Esophagus squamous epithelium (tissue), 5 donors: ENCODE measurements at regions of chr3 and their contacts with region 1.

Region 1: GRCh38 chr3:107271787-107272387 is 105.4 kb upstream of the CCDC54 start:
- DNase-seq: no peak
- H3K4me3 ChIP-seq: no peak overlapping the region
- H3K27ac ChIP-seq: no peak overlapping the region
- H3K4me1 ChIP-seq: no peaks in the 10 kb centered on the region
- H3K27me3 ChIP-seq: no peaks in the 10 kb centered on the region
- CTCF ChIP-seq: peak; percentile 42 to 70 (median 54)
- POLR2A ChIP-seq: no peak

Region 2: DNA sequence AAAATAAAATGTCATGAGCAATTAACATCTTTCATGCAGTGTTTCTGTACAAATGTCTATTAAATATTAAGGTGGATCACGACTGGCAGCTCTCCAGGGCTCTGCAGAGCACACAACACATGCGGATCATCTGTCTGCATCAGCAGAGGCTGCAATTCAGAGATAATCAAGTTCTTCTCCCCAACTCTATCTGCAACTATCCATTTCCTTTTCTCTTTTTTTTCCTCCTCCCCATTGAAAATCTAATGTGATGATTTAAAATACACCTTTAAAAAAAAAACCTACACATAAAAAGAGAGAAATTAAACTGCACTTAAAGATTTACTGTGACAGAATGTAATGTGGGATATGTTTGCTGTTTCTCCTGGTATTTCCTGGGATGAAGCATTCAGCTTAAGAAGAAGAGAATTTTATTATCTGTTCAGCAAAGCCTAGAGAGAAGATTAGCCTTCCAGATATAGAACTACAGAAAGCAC is 247.3 kb before region 1 on chr3:
- intact Hi-C with region 1: no loop called
- DNase-seq: no peak
- H3K4me3 ChIP-seq: no peak overlapping the region
- H3K27ac ChIP-seq: no peak overlapping the region
- H3K4me1 ChIP-seq: no peaks in the 10 kb centered on the region
- H3K27me3 ChIP-seq: no peaks in the 10 kb centered on the region
- CTCF ChIP-seq: no peak
- POLR2A ChIP-seq: no peak

Region 3: DNA sequence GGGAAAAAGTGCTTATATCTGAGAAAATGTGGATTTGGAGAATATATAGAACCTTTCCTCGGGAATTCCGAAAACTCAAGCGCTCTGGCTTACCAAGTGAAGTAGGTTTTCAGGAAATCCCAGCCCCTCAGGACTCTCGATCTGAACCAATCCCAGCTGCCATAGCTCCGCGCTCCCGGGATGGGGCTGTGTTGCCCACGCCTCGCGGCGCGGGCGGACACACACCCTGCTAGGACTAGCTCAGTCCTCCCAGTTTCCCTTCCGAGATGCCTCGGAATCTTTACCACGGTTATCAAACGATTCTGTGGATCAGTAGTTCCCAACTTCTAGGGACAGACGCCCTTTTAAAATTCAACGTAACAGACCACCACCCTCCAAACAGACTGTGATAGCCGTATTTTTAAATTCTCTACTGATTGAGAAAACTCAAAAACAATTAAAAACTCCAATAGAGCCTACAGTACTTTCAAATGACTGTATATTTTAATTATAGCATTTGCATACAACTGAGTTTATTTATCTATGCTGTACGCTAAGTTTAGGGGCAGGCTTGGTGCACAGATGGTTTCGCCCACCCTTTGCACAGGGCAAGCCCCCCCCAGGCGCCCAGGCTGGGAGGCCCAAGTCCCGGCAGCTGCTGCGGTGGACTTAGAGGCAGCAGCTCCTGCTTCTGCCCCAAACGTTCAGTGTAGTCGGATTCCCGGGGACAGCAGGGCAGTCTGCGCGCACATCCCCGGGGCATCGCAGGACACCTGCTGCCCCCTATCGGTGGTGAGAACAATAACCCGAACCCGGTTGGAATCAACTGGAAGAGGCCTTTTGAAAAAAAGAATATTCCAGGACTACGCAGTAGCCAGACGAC is 157.7 kb after region 1 on chr3:
- intact Hi-C with region 1: loop called (anchors 5 kb)
- DNase-seq: peak; percentile 10
- H3K4me3 ChIP-seq: peak overlapping the region; percentile 7 to 81 (median 74)
- H3K27ac ChIP-seq: peak overlapping the region; percentile 32 to 96 (median 94)
- H3K4me1 ChIP-seq: peaks cover 16 to 30% (median 16%) of the 10 kb centered on the region in 3 donors
- H3K27me3 ChIP-seq: no peaks in the 10 kb centered on the region
- CTCF ChIP-seq: peak; percentile 67 to 87 (median 84)
- POLR2A ChIP-seq: no peak